Aorta (tissue), 5 donors: ENCODE measurements at regions of chr6 and their contacts with region 1.

Region 1: DNA sequence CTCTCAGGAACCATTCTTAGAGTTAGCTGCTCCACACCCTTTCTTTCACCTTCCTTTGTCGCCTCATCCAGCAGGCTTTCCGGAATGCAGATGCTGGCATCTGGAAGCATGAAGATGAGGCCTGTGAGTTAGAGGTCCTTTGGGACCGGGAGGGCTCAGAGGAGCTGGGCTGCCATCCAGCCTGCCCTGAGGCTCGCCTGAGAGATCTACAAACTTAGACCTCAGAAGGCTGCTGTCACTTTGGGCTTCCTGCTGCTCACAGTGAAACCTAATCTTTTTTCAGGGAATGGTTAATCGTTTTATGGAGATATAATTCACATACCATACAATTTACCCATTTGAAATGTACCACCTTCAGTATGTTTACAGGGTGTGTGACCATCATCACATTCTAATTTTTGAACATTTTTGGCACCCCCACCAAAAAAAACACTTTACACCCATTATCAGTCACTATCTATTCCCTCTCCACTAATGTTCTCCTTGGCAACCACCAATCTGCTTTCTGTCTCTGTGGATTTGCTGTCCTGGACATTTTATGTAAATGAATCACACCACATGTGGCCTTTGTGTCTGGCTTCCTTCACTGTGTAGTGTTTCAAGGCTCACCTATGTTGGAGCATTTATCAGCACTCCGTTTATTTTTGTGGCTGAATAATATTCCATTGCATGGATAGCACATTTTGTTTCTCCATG is 20.0 kb upstream of the MPC1 start:
- DNase-seq: no peak
- ATAC-seq: no peak
- H3K4me3 ChIP-seq: no peak overlapping the region
- H3K27ac ChIP-seq: no peak overlapping the region
- H3K4me1 ChIP-seq: no peaks in the 10 kb centered on the region
- H3K27me3 ChIP-seq: no peaks in the 10 kb centered on the region

Region 2: GRCh38 chr6:166112580-166112979 is 290.1 kb before region 1 on chr6:
- intact Hi-C with region 1: no loop called
- DNase-seq: no peak
- ATAC-seq: peak; percentile 48
- H3K4me3 ChIP-seq: no peak overlapping the region
- H3K27ac ChIP-seq: no peak overlapping the region
- H3K4me1 ChIP-seq: no peaks in the 10 kb centered on the region
- H3K27me3 ChIP-seq: no peaks in the 10 kb centered on the region

Region 3: GRCh38 chr6:166275714-166276166 is 127.0 kb before region 1 on chr6:
- intact Hi-C with region 1: loop called (anchors 1 to 2 kb)
- DNase-seq: peak; percentile 69 to 91
- ATAC-seq: peak; percentile 85
- H3K4me3 ChIP-seq: no peak overlapping the region
- H3K27ac ChIP-seq: no peak overlapping the region
- H3K4me1 ChIP-seq: no peaks in the 10 kb centered on the region
- H3K27me3 ChIP-seq: no peaks in the 10 kb centered on the region

Region 4: DNA sequence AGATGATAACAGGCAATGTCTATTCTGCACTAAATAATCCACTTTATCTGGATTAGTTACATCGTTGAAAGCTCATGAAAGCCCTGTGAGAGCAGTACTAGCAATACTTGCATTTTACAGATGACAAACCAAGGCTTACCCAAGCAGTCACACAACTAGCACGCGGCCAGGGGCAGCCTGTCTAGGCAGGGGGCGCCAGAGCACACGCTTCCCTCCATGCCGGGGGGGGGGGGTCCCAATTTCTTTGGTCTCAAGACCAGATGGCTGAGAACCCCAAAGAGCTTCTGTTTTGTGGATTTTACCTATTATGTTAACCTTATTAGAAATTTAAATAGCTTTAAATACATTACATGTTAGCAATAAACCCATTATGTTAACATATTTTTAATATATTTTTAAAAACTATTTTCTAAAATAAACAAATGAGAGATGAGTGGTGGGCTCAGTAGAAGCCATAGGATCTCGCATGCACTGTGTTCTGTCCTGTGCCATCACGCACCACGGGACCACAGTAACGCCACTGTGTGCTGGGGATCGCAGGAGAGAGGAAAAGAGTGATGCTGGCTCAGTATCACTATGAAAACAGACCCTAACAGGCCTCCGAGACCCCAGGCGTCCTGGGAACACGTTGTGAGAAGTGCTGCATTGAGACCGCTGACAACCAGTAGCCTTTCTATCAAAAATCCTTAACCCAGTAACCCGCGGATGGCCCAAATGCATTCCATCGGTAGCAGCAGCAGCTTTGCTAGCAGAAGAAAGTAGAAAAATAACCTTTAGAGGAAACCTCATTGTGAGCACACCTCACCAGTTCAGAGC is 89.3 kb before region 1 on chr6:
- intact Hi-C with region 1: loop called (anchors 1 to 2 kb)
- DNase-seq: no peak
- ATAC-seq: peak; percentile 87
- H3K4me3 ChIP-seq: no peak overlapping the region
- H3K27ac ChIP-seq: no peak overlapping the region
- H3K4me1 ChIP-seq: no peaks in the 10 kb centered on the region
- H3K27me3 ChIP-seq: no peaks in the 10 kb centered on the region